OCI-LY7 (cell line): ENCODE measurements at regions of chr15 and their contacts with region 1.

Region 1: DNA sequence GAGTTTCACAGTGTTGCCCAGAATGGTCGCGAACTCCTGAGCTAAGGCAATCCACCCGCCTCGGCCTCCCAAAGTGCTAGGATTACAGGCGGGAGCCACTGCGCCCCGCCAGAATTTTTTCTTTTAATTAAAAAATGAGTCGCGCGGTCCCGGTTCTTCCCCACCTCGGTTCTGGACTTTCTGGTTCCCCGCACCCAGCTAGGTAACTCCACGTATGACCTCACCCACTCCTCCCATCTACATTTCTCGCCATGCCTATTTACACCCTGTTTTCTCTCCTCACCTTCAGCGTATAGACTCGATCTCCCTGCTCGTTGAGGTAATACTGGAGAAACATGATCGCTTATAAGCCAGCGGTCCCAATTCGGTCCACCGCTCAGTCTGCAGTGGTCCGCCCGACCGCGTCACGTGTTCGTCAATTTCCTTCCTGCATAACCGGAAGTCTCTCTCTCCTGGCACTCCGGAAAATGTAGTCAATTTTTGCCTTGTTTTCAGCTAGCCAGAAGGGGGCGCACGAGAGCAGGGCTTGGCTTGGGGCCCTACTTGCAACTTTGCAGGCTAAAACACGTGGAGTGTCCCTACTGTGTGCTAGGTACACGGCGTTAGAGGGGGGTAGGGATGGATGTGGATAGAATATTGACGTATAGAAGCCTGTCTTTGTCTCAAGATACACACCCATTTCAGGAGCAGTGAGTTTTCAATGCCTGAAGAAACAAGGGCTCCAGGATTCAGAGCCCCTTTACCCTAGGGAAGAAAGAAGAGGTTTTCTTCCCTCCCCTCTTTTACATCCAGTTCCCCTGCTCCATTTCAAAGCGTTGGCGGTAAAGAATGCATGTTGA is at the starts of genes NOP10 and NUTM1:
- DNase-seq: peak; percentile 94
- H3K4me3 ChIP-seq: peak within 1 kb of the TSS; percentile 91
- H3K27ac ChIP-seq: peak within 1 kb of the TSS; percentile 78
- H3K4me1 ChIP-seq: peaks cover 12% of the 10 kb centered on the region
- CTCF ChIP-seq: peak; percentile 87
- total RNA-seq, gene NOP10: 115 and 191 TPM in 2 replicates
- total RNA-seq, gene NUTM1: not detected in 2 replicates

Region 2: DNA sequence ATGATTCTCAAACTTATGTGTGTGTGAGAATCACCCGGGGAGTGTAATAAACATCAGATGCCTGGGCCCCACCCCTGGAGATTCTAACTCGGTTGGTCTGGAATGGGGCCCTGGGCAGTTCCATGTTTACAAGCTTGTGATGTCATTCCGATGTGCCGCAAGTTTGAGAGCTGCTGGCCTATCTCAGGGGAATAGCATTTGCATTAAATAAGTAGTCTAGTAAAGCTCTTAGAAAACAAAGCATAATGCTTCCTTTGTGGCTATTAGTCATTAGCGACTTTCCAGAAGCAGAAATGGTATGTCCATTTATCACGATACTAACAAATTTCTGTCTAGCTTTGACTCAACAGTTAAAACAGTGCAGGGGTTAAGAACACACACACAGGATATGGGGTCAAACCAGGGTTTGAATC is 220.2 kb before region 1 on chr15:
- CTCF ChIA-PET with region 1: no interaction called
- POLR2A ChIA-PET with region 1: no interaction called
- intact Hi-C with region 1: no loop called
- DNase-seq: no peak
- H3K4me3 ChIP-seq: no peak overlapping the region
- H3K27ac ChIP-seq: no peak overlapping the region
- H3K4me1 ChIP-seq: no peaks in the 10 kb centered on the region
- CTCF ChIP-seq: no peak

Region 3: DNA sequence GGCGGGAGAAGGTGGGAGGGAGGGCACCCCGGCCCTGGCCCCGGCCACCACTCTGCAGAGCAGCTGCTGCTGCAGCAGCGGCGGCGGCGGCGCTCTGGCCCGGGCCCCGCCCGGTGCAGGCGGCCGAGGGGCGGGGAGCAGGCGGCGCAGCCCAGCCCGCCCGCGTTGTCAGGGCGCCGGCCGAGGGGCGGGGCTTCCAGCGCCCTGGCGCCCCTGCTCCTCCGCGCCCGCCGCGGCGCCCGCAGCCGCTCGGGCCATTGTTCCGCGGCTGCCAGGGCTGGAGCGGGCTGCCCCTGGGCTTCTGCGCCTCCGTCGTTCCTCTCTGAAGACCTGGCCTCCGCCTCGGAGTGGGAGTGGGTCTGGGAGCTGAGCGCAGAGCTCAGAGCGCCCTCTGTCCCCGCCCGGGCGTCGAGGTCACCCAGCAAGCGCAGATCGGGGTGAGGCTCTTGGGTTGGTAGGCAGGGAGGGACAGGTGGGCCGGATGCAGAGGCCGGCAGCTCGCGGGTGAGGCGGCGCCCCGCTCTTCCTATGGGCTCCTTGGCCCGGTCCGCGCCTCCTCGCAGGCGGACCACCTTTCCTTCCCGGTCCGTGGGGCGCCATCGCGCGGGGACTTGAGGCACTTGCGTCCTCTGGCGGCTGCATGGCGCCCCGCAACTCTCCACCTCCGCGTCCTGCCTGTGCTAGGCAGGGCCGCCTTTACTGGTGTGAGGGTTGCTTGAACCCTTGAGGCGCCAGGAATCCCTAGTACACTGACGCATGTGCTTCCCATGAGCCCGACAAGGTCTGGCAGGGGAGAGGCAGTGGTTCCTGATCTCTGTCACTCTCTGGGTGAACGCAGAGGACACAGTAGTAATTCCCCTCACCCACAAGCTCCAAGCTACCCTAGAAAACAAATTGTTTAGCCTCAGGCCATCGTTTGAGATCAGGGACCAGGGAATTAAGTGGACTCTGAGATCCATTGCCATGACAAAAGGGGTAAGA is 24.4 kb after region 1 on chr15 and contains the start of gene LPCAT4:
- CTCF ChIA-PET with region 1: interaction called, 4 read pairs
- POLR2A ChIA-PET with region 1: interaction called, 5 read pairs
- intact Hi-C with region 1: loop called (anchors 1 kb)
- DNase-seq: peak; percentile 95
- H3K4me3 ChIP-seq: peak within 1 kb of the TSS; percentile 99
- H3K27ac ChIP-seq: peak within 1 kb of the TSS; percentile 90
- H3K4me1 ChIP-seq: peaks cover 18% of the 10 kb centered on the region
- CTCF ChIP-seq: peak; percentile 91
- total RNA-seq, gene LPCAT4: 27.8 and 44.3 TPM in 2 replicates